SK-N-SH (cell line): ENCODE measurements at regions of chr20 and their contacts with region 1.

Region 1: DNA sequence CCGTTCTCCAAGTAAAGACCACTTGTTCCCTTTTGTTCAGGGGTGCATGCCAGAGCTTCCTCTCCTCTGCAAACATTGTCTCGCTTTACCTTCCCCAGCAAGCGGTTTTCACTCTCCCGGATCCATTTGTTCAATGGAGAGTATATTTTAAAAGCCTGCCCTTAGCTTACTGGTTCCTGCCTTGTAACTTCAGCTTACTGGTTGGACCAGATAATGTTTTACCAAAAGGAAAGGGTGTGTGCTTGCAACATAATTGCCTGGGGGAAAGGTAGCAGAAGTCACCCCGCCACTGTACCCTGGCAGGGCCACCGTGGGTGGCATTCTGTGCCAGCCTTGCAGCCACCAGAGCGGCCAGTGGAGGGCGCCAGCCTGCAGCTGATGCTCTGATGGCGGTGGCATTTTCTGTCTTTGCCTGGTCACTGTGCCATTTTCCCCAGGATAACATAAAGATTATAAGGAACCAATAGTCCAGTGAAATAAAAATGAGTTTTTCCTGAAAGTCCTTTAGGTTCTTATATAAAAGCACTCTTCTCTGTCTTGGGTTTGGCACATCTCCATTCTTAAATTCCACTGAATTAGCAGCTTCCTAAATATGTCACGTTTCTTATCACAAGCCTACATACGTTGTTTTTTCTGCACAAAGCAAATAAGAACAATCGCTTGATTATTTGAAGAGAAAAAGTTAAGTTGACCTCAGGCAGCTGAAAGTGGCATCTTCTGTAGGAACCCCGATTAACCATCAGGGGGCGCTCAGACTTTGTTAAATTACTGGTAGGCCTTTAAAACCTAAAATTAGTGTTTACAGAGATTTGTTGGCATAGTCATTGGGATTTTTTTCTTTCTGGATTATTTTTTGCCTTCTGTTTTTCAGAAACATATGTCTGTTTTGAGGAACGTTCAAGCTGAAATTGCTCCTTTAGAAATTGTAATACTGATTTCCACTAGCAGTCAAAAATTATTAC is 67.4 kb upstream of the XRN2 start:
- DNase-seq: peak; percentile 65
- H3K4me3 ChIP-seq: no peak overlapping the region; a peak in 1 of 4 replicates
- H3K27ac ChIP-seq: no peak overlapping the region
- H3K4me1 ChIP-seq: peaks cover 0 to 3% of the 10 kb centered on the region in 2 experiments; a peak in 2 of 4 replicates
- H3K27me3 ChIP-seq: no peaks in the 10 kb centered on the region
- CTCF ChIP-seq: peak; percentile 92
- EP300 ChIP-seq: no peak
- RAD21 ChIP-seq: peak; percentile 81

Region 2: GRCh38 chr20:20843982-20844381 is 391.8 kb before region 1 on chr20:
- CTCF ChIA-PET with region 1: interaction called, 27 read pairs
- POLR2A ChIA-PET with region 1: no interaction called
- DNase-seq: no peak
- H3K4me3 ChIP-seq: no peak overlapping the region
- H3K27ac ChIP-seq: no peak overlapping the region
- H3K4me1 ChIP-seq: no peaks in the 10 kb centered on the region
- H3K27me3 ChIP-seq: peaks cover 32% of the 10 kb centered on the region
- CTCF ChIP-seq: no peak
- EP300 ChIP-seq: no peak
- RAD21 ChIP-seq: no peak

Region 3: GRCh38 chr20:20933142-20933958 is 302.4 kb before region 1 on chr20:
- CTCF ChIA-PET with region 1: no interaction called
- POLR2A ChIA-PET with region 1: no interaction called
- DNase-seq: no peak
- H3K4me3 ChIP-seq: no peak overlapping the region
- H3K27ac ChIP-seq: no peak overlapping the region
- H3K4me1 ChIP-seq: no peaks in the 10 kb centered on the region
- H3K27me3 ChIP-seq: no peaks in the 10 kb centered on the region; the same call in 1 of the 2 replicates
- CTCF ChIP-seq: no peak
- EP300 ChIP-seq: no peak
- RAD21 ChIP-seq: no peak

Region 4: DNA sequence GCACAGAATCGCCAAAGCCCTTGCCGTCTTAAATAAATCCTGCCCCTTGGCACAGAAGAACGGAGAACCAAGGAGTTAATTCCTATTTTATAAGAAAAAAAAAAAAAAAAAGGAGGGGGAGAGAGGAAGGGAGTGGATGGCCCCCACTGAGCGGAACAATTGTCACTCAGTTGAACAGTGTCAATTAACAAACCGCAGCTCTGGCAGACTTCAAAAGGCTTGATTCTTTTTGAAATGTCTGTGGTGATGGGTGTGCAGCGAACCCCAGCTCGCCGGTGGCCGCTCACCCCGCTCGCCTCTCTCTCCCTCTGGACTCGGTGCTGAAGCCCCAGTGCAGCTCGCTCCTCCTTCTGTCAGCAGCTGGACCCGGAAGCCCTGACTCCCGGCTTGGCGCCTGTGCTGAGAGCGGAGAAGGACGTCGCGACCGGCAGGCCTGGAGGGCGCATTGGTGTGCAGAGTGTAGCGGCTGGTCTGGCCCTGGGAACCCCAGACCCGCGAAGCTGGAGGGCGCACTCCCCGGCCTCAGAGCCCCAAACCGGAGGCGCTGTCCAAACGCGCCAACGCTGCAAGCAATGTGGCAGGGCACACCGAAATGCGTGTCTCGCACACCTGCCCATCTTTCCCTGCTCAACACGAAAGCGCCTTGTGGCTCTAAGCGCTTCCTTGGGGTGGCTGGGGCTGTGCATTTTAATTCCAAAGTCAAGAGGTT is 133.0 kb before region 1 on chr20:
- CTCF ChIA-PET with region 1: interaction called, 11 read pairs
- POLR2A ChIA-PET with region 1: no interaction called
- DNase-seq: peak; percentile 64
- H3K4me3 ChIP-seq: no peak overlapping the region; a peak in 1 of 4 replicates
- H3K27ac ChIP-seq: no peak overlapping the region
- H3K4me1 ChIP-seq: peaks cover 0 to 23% of the 10 kb centered on the region in 2 experiments; a peak in 1 of 4 replicates
- H3K27me3 ChIP-seq: peaks cover 89% of the 10 kb centered on the region
- CTCF ChIP-seq: no peak
- EP300 ChIP-seq: no peak
- RAD21 ChIP-seq: no peak

Region 5: DNA sequence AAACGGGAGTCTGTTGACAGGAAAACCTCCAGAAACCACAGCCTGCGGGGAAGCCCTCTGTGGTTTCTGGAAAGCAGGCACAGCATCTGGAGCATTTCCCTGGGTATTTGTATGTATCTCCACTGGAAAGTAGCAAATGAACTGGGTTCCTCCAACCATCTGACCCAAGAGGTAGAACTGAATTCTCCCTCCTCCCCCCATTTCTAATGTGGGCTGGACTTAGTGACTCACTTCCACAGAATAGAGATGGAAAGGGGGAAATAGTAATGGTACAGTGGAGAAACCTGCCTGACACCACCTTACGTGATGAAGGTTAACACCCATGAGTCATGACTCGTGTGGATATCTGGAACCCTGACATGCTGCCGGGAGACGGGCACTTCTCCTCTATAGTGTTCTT is 15.5 kb after region 1 on chr20:
- CTCF ChIA-PET with region 1: interaction called, 53 read pairs
- POLR2A ChIA-PET with region 1: no interaction called
- DNase-seq: no peak
- H3K4me3 ChIP-seq: no peak overlapping the region
- H3K27ac ChIP-seq: no peak overlapping the region
- H3K4me1 ChIP-seq: no peaks in the 10 kb centered on the region
- H3K27me3 ChIP-seq: no peaks in the 10 kb centered on the region
- CTCF ChIP-seq: no peak
- EP300 ChIP-seq: no peak
- RAD21 ChIP-seq: no peak

Region 6: DNA sequence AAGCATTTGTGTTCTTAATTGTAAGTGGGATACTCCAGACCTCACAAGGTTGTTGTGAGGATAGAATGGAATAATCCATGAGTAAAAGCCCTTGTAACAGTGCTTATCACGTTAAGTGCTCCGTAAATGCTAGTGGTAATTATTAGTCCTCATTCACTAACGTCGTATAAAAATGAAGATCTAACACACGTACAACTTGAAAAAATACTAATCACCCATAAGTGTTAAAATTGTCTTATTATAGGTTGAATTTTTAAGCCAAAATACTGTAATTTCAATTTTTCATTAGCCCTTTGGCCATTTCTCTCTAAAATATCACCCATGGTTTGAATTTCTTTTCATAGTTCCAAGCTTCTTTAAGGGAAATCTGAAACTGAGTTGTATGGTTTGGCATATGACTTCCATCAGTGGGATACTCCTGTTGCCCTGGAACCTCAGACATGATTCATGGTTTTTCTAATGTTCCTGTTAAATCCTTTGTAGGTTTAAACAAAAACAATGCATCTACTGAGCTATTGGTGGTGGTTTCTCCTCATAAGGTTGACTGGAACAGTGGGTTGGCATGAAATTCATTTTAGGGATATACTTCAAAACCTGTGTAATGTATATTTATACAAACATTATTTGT is 86.4 kb after region 1 on chr20:
- CTCF ChIA-PET with region 1: interaction called, 15 read pairs
- POLR2A ChIA-PET with region 1: no interaction called
- DNase-seq: no peak
- H3K4me3 ChIP-seq: no peak overlapping the region
- H3K27ac ChIP-seq: no peak overlapping the region
- H3K4me1 ChIP-seq: peaks cover 2 to 21% of the 10 kb centered on the region in 2 experiments; a peak in 3 of 4 replicates
- H3K27me3 ChIP-seq: no peaks in the 10 kb centered on the region
- CTCF ChIP-seq: no peak
- EP300 ChIP-seq: no peak
- RAD21 ChIP-seq: no peak

Region 7: DNA sequence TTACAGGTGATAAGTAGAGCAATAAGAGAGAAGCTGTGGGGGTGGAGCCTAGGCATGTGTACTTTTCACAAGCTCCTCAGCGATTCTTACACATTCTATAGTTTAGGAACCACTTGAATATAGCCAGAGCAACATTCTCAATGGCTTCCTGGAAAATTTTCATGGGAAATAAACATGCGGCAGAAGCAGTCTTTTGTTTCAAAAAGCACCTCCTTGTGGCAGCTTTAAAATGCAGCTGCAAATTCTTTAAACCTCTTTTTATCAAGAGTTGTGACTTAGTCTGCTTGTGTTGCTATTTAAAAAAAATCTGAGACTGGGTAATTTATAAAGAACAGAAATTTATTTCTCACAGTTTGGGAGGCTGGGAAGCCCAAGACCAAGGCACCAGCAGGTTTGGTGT is 254.3 kb after region 1 on chr20:
- CTCF ChIA-PET with region 1: interaction called, 336 read pairs
- POLR2A ChIA-PET with region 1: no interaction called
- DNase-seq: no peak
- H3K4me3 ChIP-seq: no peak overlapping the region
- H3K27ac ChIP-seq: no peak overlapping the region
- H3K4me1 ChIP-seq: no peaks in the 10 kb centered on the region
- H3K27me3 ChIP-seq: peaks cover 49% of the 10 kb centered on the region
- CTCF ChIP-seq: peak; percentile 53
- EP300 ChIP-seq: no peak
- RAD21 ChIP-seq: peak; percentile 33; the same call in 1 of the 2 replicates